ENCODE measurements at regions of chr11 and their contacts with region 1.

Region 1: GRCh38 chr11:94519478-94520084 is 7.3 kb downstream of the C11orf97 start:
- DNase-seq: no peak
- H3K4me3 ChIP-seq: no peak overlapping the region
- H3K27ac ChIP-seq: no peak overlapping the region
- H3K4me1 ChIP-seq: no peaks in the 10 kb centered on the region
- H3K27me3 ChIP-seq: no peaks in the 10 kb centered on the region
- CTCF ChIP-seq: peak; percentile 68 to 69

Region 2: DNA sequence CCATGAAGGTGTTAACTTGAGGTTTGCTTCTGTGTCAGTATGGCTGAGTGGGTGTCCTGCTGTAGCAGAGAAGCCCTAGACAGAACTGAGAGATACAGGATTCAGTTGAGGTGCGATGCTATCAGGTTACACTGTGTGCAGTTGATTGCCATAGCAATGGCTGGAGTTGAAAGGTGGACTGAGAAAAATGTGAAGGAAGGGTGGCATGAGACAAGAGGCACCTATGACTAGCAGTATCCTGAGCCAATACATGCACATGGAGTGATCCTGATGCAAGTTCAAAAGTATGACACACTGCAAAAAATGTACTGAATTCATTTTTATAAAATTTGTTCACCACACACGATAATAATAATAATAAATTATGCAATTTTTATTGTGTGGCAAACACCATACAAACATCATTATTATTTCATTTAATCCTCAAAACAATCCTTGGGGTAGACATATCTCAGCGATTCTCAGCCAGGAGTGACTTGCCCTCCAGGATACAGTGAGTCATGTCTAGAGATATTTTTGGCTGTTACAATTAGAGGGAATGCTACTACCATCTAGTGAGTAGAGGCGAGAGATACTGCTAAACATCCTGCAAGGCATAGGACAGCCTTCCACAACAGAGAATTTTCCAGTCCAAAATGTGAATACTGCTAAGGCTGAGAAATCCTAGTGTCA is 43.7 kb after region 1 on chr11:
- intact Hi-C with region 1: loop called (anchors 5 kb)
- DNase-seq: no peak
- H3K4me3 ChIP-seq: no peak overlapping the region
- H3K27ac ChIP-seq: no peak overlapping the region
- H3K4me1 ChIP-seq: peaks cover 0 to 25% (median 3%) of the 10 kb centered on the region in 4 donors
- H3K27me3 ChIP-seq: no peaks in the 10 kb centered on the region
- CTCF ChIP-seq: peak; percentile 32 to 45

Region 3: GRCh38 chr11:94623120-94623735 is 103.6 kb after region 1 on chr11:
- intact Hi-C with region 1: no loop called
- DNase-seq: peak in 1 of 2 donors; percentile 27
- H3K4me3 ChIP-seq: no peak overlapping the region
- H3K27ac ChIP-seq: no peak overlapping the region
- H3K4me1 ChIP-seq: no peaks in the 10 kb centered on the region
- H3K27me3 ChIP-seq: no peaks in the 10 kb centered on the region
- CTCF ChIP-seq: peak; percentile 70 to 71

Region 4: DNA sequence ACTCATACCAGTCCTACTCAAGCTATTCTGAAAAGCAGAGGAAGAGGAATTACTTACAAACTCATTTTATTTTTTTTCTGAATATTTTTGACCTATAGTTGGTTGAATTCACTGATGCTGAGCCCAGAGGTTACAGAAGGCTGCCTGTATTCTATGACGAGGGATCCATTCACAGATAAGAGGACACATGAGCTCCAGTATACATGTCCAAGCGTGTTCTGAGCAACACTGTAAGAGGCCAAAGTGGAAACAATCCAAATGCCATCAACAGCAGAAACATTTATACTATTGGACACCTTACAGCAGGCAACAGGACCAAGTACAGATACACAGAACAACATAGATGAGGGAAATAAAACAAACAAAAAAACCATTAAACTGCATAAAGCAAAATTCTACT is 515.7 kb after region 1 on chr11:
- intact Hi-C with region 1: no loop called
- DNase-seq: no peak
- H3K4me3 ChIP-seq: no peak overlapping the region
- H3K27ac ChIP-seq: no peak overlapping the region
- H3K4me1 ChIP-seq: peaks cover 0 to 4% (median 0%) of the 10 kb centered on the region in 4 donors
- H3K27me3 ChIP-seq: peaks cover 0 to 18% of the 10 kb centered on the region in 2 donors
- CTCF ChIP-seq: no peak

Region 5: DNA sequence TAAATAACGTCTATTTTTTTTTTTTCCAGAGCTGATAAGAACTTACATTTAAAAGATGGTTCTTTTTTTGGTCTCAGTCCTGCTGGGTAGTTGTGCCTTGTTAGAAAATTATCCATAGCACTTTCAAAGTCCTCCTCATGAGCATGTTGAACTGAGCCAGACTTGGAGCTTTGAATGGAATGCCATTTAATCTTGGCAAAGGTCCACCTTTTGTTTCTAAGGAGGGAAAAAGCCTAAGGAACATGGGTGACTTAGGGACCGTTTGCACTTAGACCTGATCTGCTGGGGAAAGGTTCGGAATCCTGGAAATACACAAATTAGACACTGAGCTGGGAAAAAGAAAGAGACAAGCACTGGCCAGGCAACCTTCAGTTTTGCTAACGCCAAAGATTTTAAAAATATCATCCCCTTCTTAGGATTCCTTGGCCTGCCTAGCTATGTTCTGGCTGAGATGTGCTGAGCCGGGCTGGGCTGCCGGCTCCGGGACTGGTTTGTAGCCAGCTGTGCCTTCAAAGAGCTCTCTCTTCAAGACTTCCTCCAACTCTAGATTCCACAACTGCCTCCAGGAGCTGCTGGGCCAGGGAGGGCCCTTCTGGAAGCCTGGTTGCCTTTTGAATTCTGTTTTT is 637.4 kb after region 1 on chr11:
- intact Hi-C with region 1: no loop called
- DNase-seq: peak; percentile 49 to 82
- H3K4me3 ChIP-seq: peak overlapping the region; percentile 14 to 17
- H3K27ac ChIP-seq: peak overlapping the region; percentile 33 to 74
- H3K4me1 ChIP-seq: peaks cover 0 to 40% (median 24%) of the 10 kb centered on the region in 4 donors
- H3K27me3 ChIP-seq: no peaks in the 10 kb centered on the region
- CTCF ChIP-seq: no peak

Measured in tibial artery (tissue), 4 donors.